ENCODE measurements at regions of chr17 and their contacts with region 1.

Region 1: DNA sequence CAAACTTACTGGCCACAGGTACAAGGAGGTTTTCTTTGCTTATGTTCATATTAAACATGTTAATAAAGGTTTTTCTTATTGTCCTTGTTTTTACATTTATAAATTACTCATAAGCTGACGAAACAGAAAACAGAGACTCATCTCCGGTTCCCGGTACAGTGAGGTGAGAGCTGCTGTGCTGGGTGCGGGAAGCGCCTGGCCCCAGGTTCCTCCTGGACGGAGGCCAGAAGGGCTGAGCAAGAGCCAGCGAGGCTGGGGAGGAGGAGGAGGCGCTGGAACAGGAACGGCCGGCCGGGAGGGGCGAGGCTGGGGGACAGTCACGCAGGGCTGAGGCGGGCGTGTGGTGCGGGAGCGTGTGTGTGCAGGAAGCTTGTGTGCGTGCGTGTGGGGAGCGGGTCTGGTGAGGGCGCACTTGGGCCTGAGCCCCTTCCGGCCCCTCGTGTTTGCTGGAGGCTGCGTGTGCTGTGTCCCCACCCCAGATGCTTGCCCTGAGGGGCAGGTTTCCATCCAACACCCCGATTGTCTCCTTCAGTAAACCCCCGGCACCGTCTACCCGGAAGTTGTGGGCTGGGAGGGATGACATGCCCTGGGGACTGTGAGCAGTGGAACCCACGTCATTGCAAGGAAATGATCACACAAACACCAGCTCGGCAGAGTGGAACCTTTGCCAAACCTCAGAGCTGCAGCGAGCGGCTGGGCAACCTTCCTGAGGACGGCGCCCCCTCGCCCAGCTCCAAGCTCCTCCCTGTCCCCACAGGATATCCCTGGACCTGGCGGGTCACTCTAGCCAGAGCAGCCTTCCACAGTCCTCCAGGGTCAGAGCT is 19.5 kb downstream of the CD7 start:
- DNase-seq: peak; percentile 68 to 99 (median 96)
- ATAC-seq: peak; percentile 86
- H3K4me3 ChIP-seq: peak overlapping the region; percentile 57
- H3K4me3 Mint-ChIP-seq: peak overlapping the region; percentile 92 to 99 (median 98)
- H3K27ac ChIP-seq: peak overlapping the region; percentile 98
- H3K27ac Mint-ChIP-seq: peak overlapping the region; percentile 100
- H3K4me1 ChIP-seq: peaks cover 61 to 65% of the 10 kb centered on the region in 2 donors
- H3K4me1 Mint-ChIP-seq: peaks cover 23 to 89% (median 76%) of the 10 kb centered on the region in 7 donors
- H3K27me3 ChIP-seq: no peaks in the 10 kb centered on the region
- H3K27me3 Mint-ChIP-seq: peaks cover 0 to 3% (median 0%) of the 10 kb centered on the region in 5 donors

Region 2: DNA sequence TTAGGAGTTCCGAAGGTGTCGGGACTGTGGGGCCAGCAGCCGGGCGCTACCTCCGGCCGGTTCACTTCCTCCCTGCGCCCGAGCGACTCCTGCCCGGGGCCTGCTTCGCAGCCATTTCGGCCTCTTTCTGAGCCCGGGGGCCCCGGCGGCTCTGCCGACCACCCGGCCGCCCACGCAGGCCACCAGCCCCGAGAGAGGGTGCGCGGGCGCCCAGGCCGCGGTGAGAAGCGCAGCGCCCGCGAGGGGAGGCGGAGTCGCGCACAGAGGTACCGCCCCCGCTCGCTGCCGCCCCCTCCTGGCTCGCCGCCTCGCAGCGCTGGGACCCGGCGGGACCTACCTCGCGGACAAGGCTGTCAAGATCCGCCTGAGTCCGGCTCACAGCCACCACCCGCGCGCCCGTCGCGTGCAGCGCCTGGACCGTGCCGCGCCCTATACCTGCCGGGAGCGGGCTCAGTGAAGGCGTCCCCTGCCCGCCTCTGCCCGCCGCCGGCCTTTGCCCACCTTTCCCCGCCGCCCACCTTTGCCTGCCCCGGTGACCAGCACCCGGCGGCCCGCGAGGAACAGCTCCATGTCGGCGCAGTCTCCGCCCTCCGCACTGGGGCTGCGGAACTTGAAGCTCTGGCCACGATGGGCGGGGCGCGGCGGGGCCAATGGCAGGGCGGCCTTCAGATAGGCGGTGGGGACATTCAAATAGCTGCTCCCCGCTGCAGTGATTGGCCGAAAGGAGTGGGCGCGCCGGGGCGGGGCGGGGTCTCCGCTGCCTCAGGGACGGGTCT is 260.6 kb before region 1 on chr17 and contains the start of gene DCXR:
- CTCF ChIA-PET with region 1: no interaction called
- POLR2A ChIA-PET with region 1: no interaction called
- intact Hi-C with region 1: loop called in 1 of 2 experiments (anchors 1 kb)
- DNase-seq: peak; percentile 87 to 97 (median 93)
- ATAC-seq: peak; percentile 96
- H3K4me3 ChIP-seq: peak within 1 kb of the TSS; percentile 71
- H3K4me3 Mint-ChIP-seq: peak within 1 kb of the TSS; percentile 82 to 94 (median 89)
- H3K27ac ChIP-seq: peak within 1 kb of the TSS; percentile 75
- H3K27ac Mint-ChIP-seq: peak within 1 kb of the TSS; percentile 61 to 94 (median 90)
- H3K4me1 ChIP-seq: peaks cover 7% of the 10 kb centered on the region in 2 donors
- H3K4me1 Mint-ChIP-seq: peaks cover 14 to 29% (median 24%) of the 10 kb centered on the region in 7 donors
- H3K27me3 ChIP-seq: no peaks in the 10 kb centered on the region
- H3K27me3 Mint-ChIP-seq: no peaks in the 10 kb centered on the region
- total RNA-seq, gene DCXR: 63.0 to 130 (median 83.6) TPM

Region 3: GRCh38 chr17:82212331-82213250 is 85.3 kb before region 1 on chr17 and contains the start of gene CCDC57:
- CTCF ChIA-PET with region 1: interaction called, 5 read pairs
- POLR2A ChIA-PET with region 1: interaction called, 10 read pairs
- intact Hi-C with region 1: no loop called
- DNase-seq: peak in 2 of 9 donors; percentile 52 to 83
- ATAC-seq: peak; percentile 61
- H3K4me3 ChIP-seq: peak within 1 kb of the TSS; percentile 68
- H3K4me3 Mint-ChIP-seq: peak within 1 kb of the TSS; percentile 70 to 86 (median 82)
- H3K27ac ChIP-seq: peak within 1 kb of the TSS; percentile 82
- H3K27ac Mint-ChIP-seq: peak within 1 kb of the TSS; percentile 41 to 88 (median 79)
- H3K4me1 ChIP-seq: peaks cover 23 to 31% of the 10 kb centered on the region in 2 donors
- H3K4me1 Mint-ChIP-seq: peaks cover 5 to 45% (median 35%) of the 10 kb centered on the region in 7 donors
- H3K27me3 ChIP-seq: no peaks in the 10 kb centered on the region
- H3K27me3 Mint-ChIP-seq: peaks cover 0 to 2% (median 0%) of the 10 kb centered on the region in 5 donors
- total RNA-seq, gene CCDC57: 75.7 to 127 (median 95.0) TPM

Region 4: GRCh38 chr17:82273327-82274133 is 24.4 kb before region 1 on chr17 and contains the start of gene CSNK1D:
- CTCF ChIA-PET with region 1: interaction called, 3 read pairs
- POLR2A ChIA-PET with region 1: interaction called, 32 read pairs
- intact Hi-C with region 1: loop called (anchors 1 kb)
- DNase-seq: peak; percentile 83 to 97 (median 92)
- ATAC-seq: peak; percentile 90
- H3K4me3 ChIP-seq: peak within 1 kb of the TSS; percentile 60
- H3K4me3 Mint-ChIP-seq: peak within 1 kb of the TSS; percentile 80 to 97 (median 93)
- H3K27ac ChIP-seq: peak within 1 kb of the TSS; percentile 97
- H3K27ac Mint-ChIP-seq: peak within 1 kb of the TSS; percentile 92 to 99 (median 98)
- H3K4me1 ChIP-seq: peaks cover 37 to 42% of the 10 kb centered on the region in 2 donors
- H3K4me1 Mint-ChIP-seq: peaks cover 36 to 46% (median 41%) of the 10 kb centered on the region in 7 donors
- H3K27me3 ChIP-seq: no peaks in the 10 kb centered on the region
- H3K27me3 Mint-ChIP-seq: no peaks in the 10 kb centered on the region
- total RNA-seq, gene CSNK1D: 144 to 249 (median 176) TPM

Region 5: DNA sequence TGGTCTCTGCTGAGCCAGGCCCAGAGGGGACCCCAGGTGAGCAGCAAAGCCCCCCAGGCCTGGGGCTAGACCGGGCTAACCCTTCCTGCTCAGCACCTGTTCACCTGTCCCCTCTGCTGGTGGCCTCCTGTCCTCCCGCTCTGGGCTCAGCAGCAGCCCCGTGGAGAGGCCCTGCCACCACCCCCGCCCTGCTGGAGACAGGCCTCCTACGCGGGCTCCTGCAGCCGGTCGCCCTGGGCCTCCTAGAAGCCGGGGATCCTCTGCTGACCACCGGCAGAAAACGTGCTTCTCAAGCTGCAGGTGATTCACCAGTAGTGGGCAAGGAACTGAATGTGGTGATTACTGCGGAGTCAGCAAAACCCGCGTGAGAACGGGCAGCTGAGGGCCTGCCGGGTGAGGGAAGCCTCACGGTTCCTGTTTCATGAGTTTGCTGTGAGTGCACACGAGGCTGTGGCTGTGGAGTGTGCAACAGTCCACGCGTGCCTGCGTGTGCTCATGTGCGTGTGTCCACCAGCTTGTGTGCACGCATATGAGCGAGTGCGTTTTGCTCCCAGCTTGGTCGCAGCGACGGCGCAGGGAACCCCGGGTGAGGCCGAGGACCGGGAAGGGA is 34.8 kb after region 1 on chr17:
- CTCF ChIA-PET with region 1: interaction called, 7 read pairs
- POLR2A ChIA-PET with region 1: interaction called, 27 read pairs
- intact Hi-C with region 1: no loop called
- DNase-seq: peak in 2 of 9 donors; percentile 26 to 32
- ATAC-seq: peak; percentile 78
- H3K4me3 ChIP-seq: peak overlapping the region; percentile 60
- H3K4me3 Mint-ChIP-seq: peak overlapping the region; percentile 80 to 93 (median 90)
- H3K27ac ChIP-seq: peak overlapping the region; percentile 32
- H3K27ac Mint-ChIP-seq: peak overlapping the region in 7 of 9 donors; percentile 48 to 86 (median 79)
- H3K4me1 ChIP-seq: peaks cover 15 to 17% of the 10 kb centered on the region in 2 donors
- H3K4me1 Mint-ChIP-seq: peaks cover 16 to 33% (median 24%) of the 10 kb centered on the region in 7 donors
- H3K27me3 ChIP-seq: no peaks in the 10 kb centered on the region
- H3K27me3 Mint-ChIP-seq: peaks cover 0 to 6% (median 0%) of the 10 kb centered on the region in 5 donors

Region 6: GRCh38 chr17:82358465-82359350 is 60.8 kb after region 1 on chr17 and contains the start of gene TEX19:
- CTCF ChIA-PET with region 1: no interaction called
- POLR2A ChIA-PET with region 1: no interaction called
- intact Hi-C with region 1: no loop called
- DNase-seq: no peak
- ATAC-seq: peak; percentile 73
- H3K4me3 ChIP-seq: no peak within 1 kb of the TSS
- H3K4me3 Mint-ChIP-seq: peak within 1 kb of the TSS in 5 of 10 donors; percentile 0 to 41 (median 7)
- H3K27ac ChIP-seq: no peak within 1 kb of the TSS
- H3K27ac Mint-ChIP-seq: no peak within 1 kb of the TSS
- H3K4me1 ChIP-seq: no peaks in the 10 kb centered on the region
- H3K4me1 Mint-ChIP-seq: peaks cover 6 to 10% (median 8%) of the 10 kb centered on the region in 7 donors
- H3K27me3 ChIP-seq: no peaks in the 10 kb centered on the region
- H3K27me3 Mint-ChIP-seq: peaks cover 5 to 26% (median 13%) of the 10 kb centered on the region in 5 donors
- total RNA-seq, gene TEX19: not detected

Region 7: DNA sequence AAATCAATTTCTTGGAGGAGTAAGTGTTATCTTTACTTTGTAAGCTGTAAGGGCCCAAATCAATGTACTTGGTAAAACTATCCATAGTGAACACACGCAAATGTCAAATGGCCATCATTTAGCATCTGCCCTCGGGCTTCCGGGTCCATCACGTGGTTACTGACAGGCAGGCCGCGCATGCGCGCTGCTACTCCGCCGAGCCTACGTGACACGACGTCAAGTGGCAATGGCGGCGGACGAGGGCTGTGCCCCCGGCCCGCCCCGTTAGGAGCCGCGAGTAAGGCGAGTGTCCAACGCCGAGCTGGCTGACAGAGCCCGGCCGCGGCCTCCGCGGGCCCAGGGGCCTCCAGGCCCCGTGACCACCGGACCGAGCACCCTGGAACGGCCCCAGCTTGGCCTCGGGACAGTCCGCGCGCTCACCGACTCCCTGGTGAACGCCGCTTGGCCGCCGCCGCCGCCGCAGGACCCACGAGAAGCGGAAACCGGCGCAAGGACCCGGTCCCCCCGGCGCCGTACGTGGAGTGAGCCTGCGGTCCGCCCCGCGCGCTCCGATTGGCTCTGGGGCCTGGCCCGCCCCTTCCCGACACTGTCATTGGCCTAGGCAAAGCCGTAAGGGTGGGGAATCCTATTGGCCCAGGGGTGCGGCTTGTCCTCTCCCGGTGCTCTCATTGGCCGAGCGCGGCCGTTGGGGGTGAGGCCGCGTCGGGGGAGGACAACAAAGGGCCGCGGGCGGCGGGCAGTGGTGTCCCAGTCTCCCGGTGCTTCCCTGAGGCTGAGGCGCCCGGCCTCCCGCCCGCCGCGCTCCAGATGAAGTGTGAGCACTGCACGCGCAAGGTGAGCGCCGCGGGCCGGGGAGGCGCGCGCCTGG is 160.3 kb after region 1 on chr17 and contains the start of gene NARF:
- CTCF ChIA-PET with region 1: no interaction called
- POLR2A ChIA-PET with region 1: interaction called, 4 read pairs
- intact Hi-C with region 1: loop called in 1 of 2 experiments (anchors 1 kb)
- DNase-seq: peak; percentile 89 to 97 (median 97)
- ATAC-seq: peak; percentile 98
- H3K4me3 ChIP-seq: peak within 1 kb of the TSS; percentile 75
- H3K4me3 Mint-ChIP-seq: peak within 1 kb of the TSS; percentile 85 to 94 (median 88)
- H3K27ac ChIP-seq: peak within 1 kb of the TSS; percentile 97
- H3K27ac Mint-ChIP-seq: peak within 1 kb of the TSS; percentile 96 to 99 (median 98)
- H3K4me1 ChIP-seq: peaks cover 20% of the 10 kb centered on the region in 2 donors
- H3K4me1 Mint-ChIP-seq: peaks cover 22 to 47% (median 30%) of the 10 kb centered on the region in 7 donors
- H3K27me3 ChIP-seq: no peaks in the 10 kb centered on the region
- H3K27me3 Mint-ChIP-seq: no peaks in the 10 kb centered on the region
- total RNA-seq, gene NARF: 59.8 to 188 (median 67.1) TPM

Region 8: GRCh38 chr17:82536512-82537201 is 238.7 kb after region 1 on chr17:
- CTCF ChIA-PET with region 1: no interaction called
- POLR2A ChIA-PET with region 1: no interaction called
- intact Hi-C with region 1: no loop called
- DNase-seq: no peak
- ATAC-seq: no peak
- H3K4me3 ChIP-seq: no peak overlapping the region
- H3K4me3 Mint-ChIP-seq: peak overlapping the region in 4 of 10 donors; percentile 28 to 55 (median 47)
- H3K27ac ChIP-seq: no peak overlapping the region
- H3K27ac Mint-ChIP-seq: peak overlapping the region in 7 of 9 donors; percentile 65 to 80 (median 73)
- H3K4me1 ChIP-seq: peaks cover 4 to 8% of the 10 kb centered on the region in 2 donors
- H3K4me1 Mint-ChIP-seq: peaks cover 48 to 65% (median 54%) of the 10 kb centered on the region in 7 donors
- H3K27me3 ChIP-seq: no peaks in the 10 kb centered on the region
- H3K27me3 Mint-ChIP-seq: no peaks in the 10 kb centered on the region

Measured in naive thymus-derived CD4-positive, alpha-beta T cell (primary cell).